ENCODE measurements at regions of chr3 and their contacts with region 1.

Region 1: GRCh38 chr3:11719406-11720230 is 75.9 kb upstream of the VGLL4 start:
- DNase-seq: peak; percentile 97
- ATAC-seq: peak; percentile 78
- H3K4me3 ChIP-seq: peak overlapping the region; percentile 75
- H3K27ac ChIP-seq: peak overlapping the region; percentile 22
- H3K4me1 ChIP-seq: peaks cover 26% of the 10 kb centered on the region
- H3K27me3 ChIP-seq: no peaks in the 10 kb centered on the region
- CTCF ChIP-seq: no peak

Region 2: DNA sequence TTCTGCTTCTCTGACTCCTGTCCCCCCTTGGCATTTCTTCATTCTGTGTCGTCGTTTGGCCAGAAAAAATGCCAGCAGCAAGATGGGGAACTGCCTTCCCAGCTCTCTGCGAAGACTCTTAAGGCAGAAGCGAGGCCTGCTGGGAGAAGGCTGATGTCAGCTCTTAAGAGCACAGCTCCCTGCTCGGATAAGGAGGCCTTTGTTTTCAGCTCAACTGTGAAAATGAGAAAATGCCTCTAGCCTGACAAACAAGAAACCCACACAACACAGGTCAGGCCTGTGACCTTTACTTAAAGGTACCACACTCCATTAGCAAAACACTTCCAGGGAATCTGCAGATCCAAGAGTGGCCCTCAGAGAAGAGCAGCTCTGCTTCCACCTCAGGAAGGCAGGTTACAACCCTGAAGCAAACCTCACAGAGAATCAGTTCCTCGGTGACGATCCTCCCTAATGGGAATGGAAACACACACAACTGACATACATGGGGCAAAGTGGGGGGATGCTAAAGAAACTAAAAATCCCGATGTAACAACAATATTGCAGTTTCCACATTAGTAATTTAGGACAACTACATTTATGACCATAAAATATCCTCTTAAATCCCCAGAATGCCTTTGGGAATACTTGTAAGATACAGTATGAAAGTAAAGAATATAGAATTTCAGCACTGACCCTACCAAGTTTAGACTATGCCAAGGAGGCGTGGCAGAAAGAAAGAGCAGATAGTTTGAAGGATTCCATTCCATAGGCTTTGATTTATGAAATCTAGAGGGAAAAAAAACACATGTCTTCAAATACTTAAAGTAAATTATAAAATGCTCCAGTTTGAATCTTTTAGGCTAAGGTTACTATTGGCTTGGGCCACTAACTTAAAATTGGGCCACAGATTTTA is 128.0 kb before region 1 on chr3:
- CTCF ChIA-PET with region 1: no interaction called
- POLR2A ChIA-PET with region 1: no interaction called
- intact Hi-C with region 1: no loop called
- DNase-seq: peak; percentile 50
- ATAC-seq: no peak; the same call in 1 of the 2 replicates
- H3K4me3 ChIP-seq: no peak overlapping the region
- H3K27ac ChIP-seq: no peak overlapping the region
- H3K4me1 ChIP-seq: peaks cover 10% of the 10 kb centered on the region; the same call in 1 of the 2 replicates
- H3K27me3 ChIP-seq: no peaks in the 10 kb centered on the region
- CTCF ChIP-seq: no peak

Region 3: DNA sequence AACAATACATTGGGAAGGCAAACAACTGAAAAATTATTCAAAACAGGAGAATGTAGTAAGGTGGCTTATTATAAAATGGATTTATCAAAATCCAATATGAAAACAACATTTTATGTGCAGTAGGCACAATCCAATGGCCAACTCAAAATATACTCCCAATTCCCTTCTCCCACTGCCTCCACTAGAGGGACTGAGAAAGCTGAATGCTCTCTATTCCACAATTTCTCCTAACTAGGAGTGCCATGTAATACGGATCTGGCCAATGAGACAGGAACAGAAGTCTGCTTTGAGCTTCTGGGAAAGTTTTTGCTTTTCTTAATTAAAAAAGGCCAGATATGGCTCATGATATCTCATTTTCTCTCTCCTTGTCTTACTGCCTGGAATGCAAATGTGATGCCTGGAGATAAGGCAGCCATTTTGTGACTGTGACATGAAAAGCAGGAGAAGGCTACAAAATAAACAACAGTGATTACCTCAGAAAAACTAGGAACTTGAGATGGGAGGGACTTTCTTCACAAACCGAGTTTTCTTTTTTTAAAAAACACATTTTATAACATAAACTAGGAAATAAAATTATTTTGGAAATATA is 57.1 kb before region 1 on chr3:
- CTCF ChIA-PET with region 1: no interaction called
- POLR2A ChIA-PET with region 1: no interaction called
- intact Hi-C with region 1: loop called (anchors 2 kb)
- DNase-seq: peak; percentile 71
- ATAC-seq: peak; percentile 85
- H3K4me3 ChIP-seq: no peak overlapping the region
- H3K27ac ChIP-seq: no peak overlapping the region
- H3K4me1 ChIP-seq: peaks cover 14% of the 10 kb centered on the region; the same call in 1 of the 2 replicates
- H3K27me3 ChIP-seq: no peaks in the 10 kb centered on the region
- CTCF ChIP-seq: peak; percentile 84

Region 4: DNA sequence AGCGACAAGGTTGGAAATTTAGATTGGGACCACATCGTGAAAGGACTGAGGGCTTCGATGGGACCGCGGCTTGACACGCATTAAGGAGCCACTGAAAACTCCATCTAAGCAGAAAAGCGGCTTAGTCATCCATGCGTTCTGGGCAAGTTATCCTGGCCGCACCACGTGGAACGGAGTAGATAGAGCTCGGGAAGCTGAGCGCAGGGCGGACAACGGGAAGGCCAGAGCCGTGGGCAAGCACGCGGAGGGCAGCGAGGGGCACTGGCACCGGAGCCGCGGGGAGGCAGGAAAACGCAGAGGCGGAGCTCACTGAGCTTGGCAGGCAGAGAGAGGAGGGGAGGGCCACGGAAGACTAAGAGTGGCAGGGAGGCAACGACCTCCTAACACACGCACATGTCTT is 14.6 kb before region 1 on chr3:
- CTCF ChIA-PET with region 1: no interaction called
- POLR2A ChIA-PET with region 1: interaction called, 11 read pairs
- intact Hi-C with region 1: no loop called
- DNase-seq: no peak
- ATAC-seq: no peak
- H3K4me3 ChIP-seq: no peak overlapping the region
- H3K27ac ChIP-seq: no peak overlapping the region
- H3K4me1 ChIP-seq: no peaks in the 10 kb centered on the region
- H3K27me3 ChIP-seq: no peaks in the 10 kb centered on the region
- CTCF ChIP-seq: no peak

Region 5: GRCh38 chr3:11764931-11765363 is 45.3 kb after region 1 on chr3:
- CTCF ChIA-PET with region 1: interaction called, 3 read pairs
- POLR2A ChIA-PET with region 1: no interaction called
- intact Hi-C with region 1: loop called (anchors 2 kb)
- DNase-seq: peak; percentile 92
- ATAC-seq: peak; percentile 90
- H3K4me3 ChIP-seq: peak overlapping the region; percentile 25; the same call in 1 of the 2 replicates
- H3K27ac ChIP-seq: peak overlapping the region; percentile 63
- H3K4me1 ChIP-seq: peaks cover 20% of the 10 kb centered on the region
- H3K27me3 ChIP-seq: no peaks in the 10 kb centered on the region
- CTCF ChIP-seq: no peak

Region 6: GRCh38 chr3:11791339-11792128 is 71.9 kb after region 1 on chr3:
- CTCF ChIA-PET with region 1: no interaction called
- POLR2A ChIA-PET with region 1: no interaction called
- intact Hi-C with region 1: no loop called
- DNase-seq: peak; percentile 6
- ATAC-seq: no peak
- H3K4me3 ChIP-seq: no peak overlapping the region
- H3K27ac ChIP-seq: no peak overlapping the region
- H3K4me1 ChIP-seq: no peaks in the 10 kb centered on the region
- H3K27me3 ChIP-seq: no peaks in the 10 kb centered on the region
- CTCF ChIP-seq: no peak

Region 7: GRCh38 chr3:11835028-11835639 is 115.5 kb after region 1 on chr3:
- CTCF ChIA-PET with region 1: no interaction called
- POLR2A ChIA-PET with region 1: no interaction called
- intact Hi-C with region 1: loop called (anchors 1 kb)
- DNase-seq: peak; percentile 66
- ATAC-seq: 0 out of 2 replicates have a peak, but pooled peaks have one; percentile 58
- H3K4me3 ChIP-seq: no peak overlapping the region
- H3K27ac ChIP-seq: no peak overlapping the region
- H3K4me1 ChIP-seq: no peaks in the 10 kb centered on the region
- H3K27me3 ChIP-seq: no peaks in the 10 kb centered on the region
- CTCF ChIP-seq: peak; percentile 80